Activated CD4-positive, alpha-beta memory T cell treated with anti-CD3 and anti-CD28 coated beads for 36 hours (primary cell): ENCODE measurements at regions of chr13 and their contacts with region 1.

Region 1: DNA sequence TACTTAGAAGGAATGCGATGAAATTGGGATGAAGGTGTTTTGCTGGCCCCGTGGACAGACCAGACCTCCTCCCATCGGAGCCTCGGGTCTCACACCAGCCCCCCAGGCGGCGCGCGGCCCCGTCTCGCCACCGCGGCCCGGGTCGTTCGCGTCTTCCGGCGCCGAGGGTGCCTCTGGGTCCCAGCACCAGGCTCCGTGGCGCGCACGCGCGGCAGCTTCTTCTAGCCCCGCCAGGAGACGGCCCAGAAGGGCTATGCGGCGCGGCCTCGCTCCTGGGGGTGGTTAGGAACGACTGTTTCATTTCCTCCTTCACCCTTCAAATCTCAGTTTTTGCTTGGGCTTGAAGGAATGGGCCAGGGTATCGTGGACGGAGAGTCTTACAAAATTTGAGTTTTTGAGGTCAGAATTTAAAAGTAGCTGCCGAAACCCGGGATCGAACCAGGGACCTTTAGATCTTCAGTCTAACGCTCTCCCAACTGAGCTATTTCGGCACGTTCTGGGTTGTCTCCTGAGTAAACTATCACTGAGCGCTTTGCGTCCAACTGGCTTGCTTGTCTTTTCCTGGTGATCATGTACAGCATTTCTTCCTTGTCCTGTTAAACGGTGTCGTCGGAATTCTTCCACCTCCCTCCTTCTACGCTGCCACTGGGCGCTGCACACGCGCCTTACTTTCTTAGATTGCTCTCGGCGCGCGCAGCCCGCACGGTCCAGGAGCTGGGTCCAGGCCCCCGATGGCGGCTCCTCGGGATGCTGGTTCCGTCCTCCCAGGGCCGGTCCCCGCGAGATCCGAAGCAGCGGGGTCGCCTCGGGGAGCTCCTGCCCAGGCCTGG is 46.5 kb downstream of the TGDS start:
- DNase-seq: peak; percentile 93
- H3K4me3 Mint-ChIP-seq: peak overlapping the region; percentile 88
- H3K27ac Mint-ChIP-seq: peak overlapping the region; percentile 94
- H3K4me1 Mint-ChIP-seq: peaks cover 11% of the 10 kb centered on the region
- H3K27me3 Mint-ChIP-seq: peaks cover 2% of the 10 kb centered on the region

Region 2: DNA sequence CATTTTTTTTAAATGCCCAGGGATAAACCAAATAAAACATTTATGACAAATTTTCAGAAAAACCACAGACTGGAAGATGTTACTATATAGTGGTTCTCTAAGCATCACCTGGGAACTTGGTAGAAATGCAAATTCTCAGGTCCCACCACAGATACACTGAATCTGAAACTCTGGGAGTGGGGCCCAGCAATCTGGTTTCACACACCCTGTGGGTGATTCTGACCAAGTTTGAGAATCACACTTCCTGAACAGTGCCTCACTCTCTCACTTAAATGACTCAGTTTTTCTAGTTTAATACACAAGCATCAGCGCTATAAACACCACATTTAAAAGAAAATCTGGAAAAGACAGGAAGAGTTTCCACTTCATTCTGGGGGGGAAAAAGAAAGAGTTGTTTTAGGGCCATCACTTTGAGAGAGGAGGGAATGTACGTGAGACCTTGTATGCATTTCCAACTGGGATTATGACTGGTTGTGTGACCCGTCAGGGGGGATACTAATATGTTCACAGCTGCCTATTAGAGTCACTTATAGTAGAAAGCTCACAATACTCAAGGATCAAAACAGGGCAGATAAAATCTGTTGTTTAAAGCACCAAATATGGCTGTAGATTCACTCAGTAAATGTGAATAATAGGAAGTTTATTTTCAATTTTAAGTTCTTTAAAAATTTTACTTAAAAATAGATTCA is 755.1 kb before region 1 on chr13:
- CTCF ChIA-PET with region 1: no interaction called
- POLR2A ChIA-PET with region 1: no interaction called
- intact Hi-C with region 1: loop called (anchors 5 kb)
- DNase-seq: peak; percentile 80
- H3K4me3 Mint-ChIP-seq: no peak overlapping the region
- H3K27ac Mint-ChIP-seq: no peak overlapping the region
- H3K4me1 Mint-ChIP-seq: peaks cover 7% of the 10 kb centered on the region
- H3K27me3 Mint-ChIP-seq: peaks cover 16% of the 10 kb centered on the region

Region 3: GRCh38 chr13:94435604-94436226 is 113.7 kb before region 1 on chr13:
- CTCF ChIA-PET with region 1: interaction called, 17 read pairs
- POLR2A ChIA-PET with region 1: no interaction called
- intact Hi-C with region 1: loop called (anchors 2 kb)
- DNase-seq: no peak
- H3K4me3 Mint-ChIP-seq: no peak overlapping the region
- H3K27ac Mint-ChIP-seq: no peak overlapping the region
- H3K4me1 Mint-ChIP-seq: peaks cover 17% of the 10 kb centered on the region
- H3K27me3 Mint-ChIP-seq: peaks cover 3% of the 10 kb centered on the region

Region 4: DNA sequence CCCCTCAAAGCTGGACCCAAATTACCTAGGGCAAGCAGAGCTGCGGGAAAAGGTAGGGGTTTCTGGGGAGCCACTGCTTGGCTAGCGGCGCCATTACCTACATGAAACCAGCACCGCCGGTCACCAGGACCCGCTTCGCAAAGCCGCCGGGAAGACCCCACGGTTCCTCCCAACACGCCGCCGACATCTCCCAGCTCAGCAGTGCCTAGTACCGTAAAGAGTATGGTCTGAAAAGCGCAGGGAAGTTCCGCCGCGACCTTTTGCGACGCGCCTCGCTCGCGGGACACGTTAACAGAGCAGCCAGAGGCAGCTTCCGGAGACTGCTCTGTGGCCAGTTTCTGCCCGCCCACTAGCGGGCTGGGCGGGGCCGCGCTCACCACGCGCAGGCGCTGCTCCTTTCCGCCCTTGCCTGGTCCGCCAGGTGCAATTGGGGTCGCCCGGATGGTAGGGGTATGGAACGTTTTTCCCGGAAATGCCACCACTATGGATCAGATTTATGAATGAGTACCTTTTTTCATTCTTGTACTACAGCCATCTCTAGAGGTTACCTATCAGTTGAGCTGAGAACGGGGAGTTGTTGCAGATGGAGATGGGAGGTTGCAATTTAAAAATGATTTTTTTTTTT is 46.6 kb after region 1 on chr13 and contains the start of gene TGDS:
- CTCF ChIA-PET with region 1: interaction called, 6 read pairs
- POLR2A ChIA-PET with region 1: interaction called, 18 read pairs
- intact Hi-C with region 1: loop called (anchors 1 kb)
- DNase-seq: peak; percentile 94
- H3K4me3 Mint-ChIP-seq: peak within 1 kb of the TSS; percentile 93
- H3K27ac Mint-ChIP-seq: peak within 1 kb of the TSS; percentile 93
- H3K4me1 Mint-ChIP-seq: peaks cover 36% of the 10 kb centered on the region
- H3K27me3 Mint-ChIP-seq: no peaks in the 10 kb centered on the region
- total RNA-seq, gene TGDS: 19.0 to 19.6 TPM

Region 5: DNA sequence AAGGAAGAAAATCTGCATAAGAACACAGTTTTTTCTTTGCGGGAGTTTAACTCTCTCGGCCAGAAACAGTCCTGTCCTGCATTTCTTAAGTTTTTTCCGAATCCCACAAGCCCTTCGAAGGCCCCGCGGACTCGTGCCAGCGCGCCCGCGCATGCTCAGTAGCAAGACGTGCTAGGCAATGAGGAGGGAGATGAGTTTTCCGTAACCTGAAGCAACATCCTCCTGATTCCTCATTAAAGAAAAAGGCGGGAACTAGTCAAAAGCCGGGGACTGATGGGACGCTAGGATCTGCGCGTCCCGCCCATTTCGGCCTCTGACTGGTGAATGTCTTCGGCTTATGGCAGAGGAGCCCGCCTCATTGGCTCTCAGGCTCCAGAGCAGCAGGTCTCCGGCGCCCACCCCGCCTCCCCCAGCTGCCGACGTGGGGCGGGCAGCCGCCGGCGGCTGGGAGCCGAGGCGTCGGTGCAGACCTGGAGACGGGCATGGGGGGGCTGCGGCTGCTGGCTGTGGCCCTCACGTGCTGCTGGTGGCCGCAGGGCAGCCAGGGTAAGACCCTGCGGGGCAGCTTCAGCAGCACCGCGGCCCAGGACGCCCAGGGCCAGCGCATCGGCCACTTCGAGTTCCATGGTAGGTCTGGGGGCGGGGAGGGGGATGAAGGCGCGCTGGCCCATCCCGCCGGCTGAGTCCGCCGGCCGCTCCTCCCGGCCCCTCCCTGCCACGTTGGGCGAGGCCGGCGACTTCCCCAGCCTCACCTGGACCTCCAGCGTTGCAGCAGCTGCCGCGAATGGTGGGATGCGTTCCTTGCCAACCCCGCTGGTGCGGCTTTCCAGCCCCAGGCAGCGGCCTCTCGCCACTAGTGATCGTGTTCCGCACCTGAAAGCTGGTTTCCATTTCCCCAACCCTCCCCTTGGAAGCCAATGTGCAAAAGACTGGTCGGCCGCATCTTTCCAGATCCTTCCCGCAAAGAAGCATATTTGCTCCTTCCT is 52.3 kb after region 1 on chr13 and contains the start of gene GPR180:
- CTCF ChIA-PET with region 1: interaction called, 6 read pairs
- POLR2A ChIA-PET with region 1: interaction called, 18 read pairs
- intact Hi-C with region 1: loop called (anchors 1 kb)
- DNase-seq: peak; percentile 95
- H3K4me3 Mint-ChIP-seq: peak within 1 kb of the TSS; percentile 88
- H3K27ac Mint-ChIP-seq: peak within 1 kb of the TSS; percentile 87
- H3K4me1 Mint-ChIP-seq: peaks cover 29% of the 10 kb centered on the region
- H3K27me3 Mint-ChIP-seq: no peaks in the 10 kb centered on the region
- total RNA-seq, gene GPR180: 9.1 to 9.7 TPM

Region 6: GRCh38 chr13:94776956-94777355 is 227.5 kb after region 1 on chr13:
- CTCF ChIA-PET with region 1: no interaction called
- POLR2A ChIA-PET with region 1: no interaction called
- intact Hi-C with region 1: no loop called
- DNase-seq: no peak
- H3K4me3 Mint-ChIP-seq: no peak overlapping the region
- H3K27ac Mint-ChIP-seq: no peak overlapping the region
- H3K4me1 Mint-ChIP-seq: no peaks in the 10 kb centered on the region
- H3K27me3 Mint-ChIP-seq: peaks cover 2% of the 10 kb centered on the region

Region 7: DNA sequence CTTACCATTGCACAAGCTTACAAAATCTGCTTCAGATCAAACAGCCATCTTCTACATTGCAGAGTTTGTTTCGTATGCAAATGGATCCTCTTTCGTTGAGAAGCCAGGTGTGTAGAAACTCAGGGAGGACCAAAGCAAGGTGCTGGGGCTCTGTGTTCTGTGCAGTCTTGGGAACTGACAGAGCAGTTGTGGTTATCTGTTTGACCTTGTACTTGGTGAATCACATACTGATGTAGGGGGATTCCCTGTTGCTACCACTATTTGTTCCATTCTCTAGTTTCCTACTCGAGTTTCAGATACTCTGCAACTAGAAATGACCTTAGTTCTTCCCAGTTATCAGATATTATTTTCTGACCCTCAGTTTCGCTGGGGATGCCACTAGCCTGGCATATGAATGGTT is 907.8 kb after region 1 on chr13:
- CTCF ChIA-PET with region 1: no interaction called
- POLR2A ChIA-PET with region 1: no interaction called
- intact Hi-C with region 1: no loop called
- DNase-seq: no peak
- H3K4me3 Mint-ChIP-seq: no peak overlapping the region
- H3K27ac Mint-ChIP-seq: no peak overlapping the region
- H3K4me1 Mint-ChIP-seq: peaks cover 14% of the 10 kb centered on the region
- H3K27me3 Mint-ChIP-seq: peaks cover 6% of the 10 kb centered on the region